Breast epithelium (tissue), 4 donors: ENCODE measurements at regions of chr10 and their contacts with region 1.

Region 1: GRCh38 chr10:54797636-54798321 is 3.3 kb downstream of the PCDH15 start:
- DNase-seq: no peak
- H3K4me3 ChIP-seq: no peak overlapping the region
- H3K27ac ChIP-seq: no peak overlapping the region
- H3K4me1 ChIP-seq: no peaks in the 10 kb centered on the region
- H3K27me3 ChIP-seq: no peaks in the 10 kb centered on the region
- CTCF ChIP-seq: no peak
- POLR2A ChIP-seq: no peak

Region 2: DNA sequence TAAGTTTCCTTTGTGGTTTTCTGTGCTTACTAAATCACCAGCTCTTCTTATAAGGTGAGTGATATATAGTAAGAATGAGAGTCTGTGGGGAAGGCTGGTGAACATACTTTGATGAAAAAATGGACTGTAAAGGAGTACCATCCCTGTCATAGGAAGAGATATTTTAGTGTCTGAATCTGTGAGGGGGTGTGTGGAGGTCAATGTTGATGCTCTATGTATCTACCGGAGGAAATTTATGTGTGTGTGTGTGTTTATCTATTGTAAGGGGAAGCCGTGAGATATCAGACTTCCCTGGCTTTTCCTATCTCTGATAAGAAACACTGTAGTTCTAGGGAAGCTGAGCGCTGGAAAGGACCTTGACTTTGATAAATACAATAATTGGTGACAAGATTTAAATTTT is 175.8 kb before region 1 on chr10:
- intact Hi-C with region 1: no loop called
- DNase-seq: no peak
- H3K4me3 ChIP-seq: no peak overlapping the region
- H3K27ac ChIP-seq: no peak overlapping the region
- H3K4me1 ChIP-seq: no peaks in the 10 kb centered on the region
- H3K27me3 ChIP-seq: no peaks in the 10 kb centered on the region
- CTCF ChIP-seq: no peak
- POLR2A ChIP-seq: no peak

Region 3: GRCh38 chr10:54776623-54777022 is 21.2 kb before region 1 on chr10:
- intact Hi-C with region 1: loop called (anchors 2 kb)
- DNase-seq: no peak
- H3K4me3 ChIP-seq: no peak overlapping the region
- H3K27ac ChIP-seq: no peak overlapping the region
- H3K4me1 ChIP-seq: no peaks in the 10 kb centered on the region
- H3K27me3 ChIP-seq: no peaks in the 10 kb centered on the region
- CTCF ChIP-seq: no peak
- POLR2A ChIP-seq: no peak

Region 4: DNA sequence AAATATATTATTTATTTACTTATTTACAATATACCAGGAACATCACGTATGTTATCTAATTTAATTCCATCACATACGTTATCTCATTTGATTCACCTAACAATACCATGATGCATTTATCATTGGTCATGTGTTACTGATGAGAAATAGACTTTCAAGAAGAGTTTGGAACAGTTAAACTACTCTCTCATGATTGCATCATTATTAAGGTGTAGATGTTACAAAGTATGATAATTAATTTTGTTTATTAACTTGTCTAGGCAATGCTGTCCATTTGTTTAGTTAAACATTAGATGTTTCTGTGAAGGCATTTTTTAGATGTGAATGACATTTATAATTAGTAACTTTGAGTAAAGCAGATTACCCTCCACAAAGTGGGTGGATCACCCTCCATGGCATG is 35.2 kb after region 1 on chr10:
- intact Hi-C with region 1: no loop called
- DNase-seq: no peak
- H3K4me3 ChIP-seq: no peak overlapping the region
- H3K27ac ChIP-seq: no peak overlapping the region
- H3K4me1 ChIP-seq: no peaks in the 10 kb centered on the region
- H3K27me3 ChIP-seq: no peaks in the 10 kb centered on the region
- CTCF ChIP-seq: no peak
- POLR2A ChIP-seq: no peak

Region 5: GRCh38 chr10:55058800-55059199 is 261.0 kb after region 1 on chr10:
- intact Hi-C with region 1: no loop called
- DNase-seq: no peak
- H3K4me3 ChIP-seq: no peak overlapping the region
- H3K27ac ChIP-seq: no peak overlapping the region
- H3K4me1 ChIP-seq: no peaks in the 10 kb centered on the region
- H3K27me3 ChIP-seq: no peaks in the 10 kb centered on the region
- CTCF ChIP-seq: no peak
- POLR2A ChIP-seq: no peak

Region 6: DNA sequence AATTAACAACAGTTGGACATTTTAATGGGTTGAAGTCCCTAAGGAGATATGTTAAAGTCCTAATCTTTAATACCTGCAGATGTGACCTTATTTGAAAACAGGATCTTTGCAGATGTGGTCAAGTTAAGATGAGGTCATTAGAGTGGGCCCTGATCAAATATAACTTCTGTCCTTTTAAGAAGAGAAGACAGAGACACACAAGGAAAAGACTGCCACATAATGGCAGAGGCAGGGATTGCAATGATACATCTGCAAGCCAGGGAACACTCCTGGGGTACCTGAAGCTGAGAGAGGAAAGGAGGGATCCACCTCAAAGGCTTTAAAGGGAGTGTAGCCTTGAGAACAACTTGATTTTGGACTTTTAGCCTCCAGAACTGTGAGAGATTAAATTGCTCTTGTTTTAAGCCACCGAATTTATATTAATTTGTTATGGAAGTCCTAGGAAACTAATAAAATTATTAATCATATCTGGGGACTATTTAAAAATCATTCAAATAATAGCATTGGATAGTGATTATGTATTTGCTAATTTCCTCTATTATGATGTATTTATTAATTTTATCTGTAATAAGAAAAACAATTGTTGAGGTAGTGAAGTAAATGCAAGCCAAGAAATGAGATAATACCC is 703.3 kb after region 1 on chr10:
- intact Hi-C with region 1: no loop called
- DNase-seq: no peak
- H3K4me3 ChIP-seq: no peak overlapping the region
- H3K27ac ChIP-seq: no peak overlapping the region
- H3K4me1 ChIP-seq: no peaks in the 10 kb centered on the region
- H3K27me3 ChIP-seq: no peaks in the 10 kb centered on the region
- CTCF ChIP-seq: peak in 1 of 3 donors; percentile 23
- POLR2A ChIP-seq: no peak